CD14-positive monocyte (primary cell): ENCODE measurements at regions of chr14 and their contacts with region 1.

Region 1: GRCh38 chr14:44897045-44897844 is 64.5 kb downstream of the KLHL28 start:
- DNase-seq: peak; percentile 95 to 96 (median 96)
- H3K4me3 ChIP-seq: peak overlapping the region; percentile 75 to 83 (median 82)
- H3K4me3 Mint-ChIP-seq: peak overlapping the region; percentile 86 to 92
- H3K27ac ChIP-seq: peak overlapping the region; percentile 79 to 84
- H3K27ac Mint-ChIP-seq: peak overlapping the region; percentile 87 to 96 (median 95)
- H3K4me1 ChIP-seq: peaks cover 6 to 8% of the 10 kb centered on the region in 2 donors
- H3K4me1 Mint-ChIP-seq: peaks cover 12% of the 10 kb centered on the region
- H3K27me3 ChIP-seq: no peaks in the 10 kb centered on the region
- H3K27me3 Mint-ChIP-seq: peaks cover 0 to 5% (median 0%) of the 10 kb centered on the region in 3 donors
- CTCF ChIP-seq: no peak

Region 2: DNA sequence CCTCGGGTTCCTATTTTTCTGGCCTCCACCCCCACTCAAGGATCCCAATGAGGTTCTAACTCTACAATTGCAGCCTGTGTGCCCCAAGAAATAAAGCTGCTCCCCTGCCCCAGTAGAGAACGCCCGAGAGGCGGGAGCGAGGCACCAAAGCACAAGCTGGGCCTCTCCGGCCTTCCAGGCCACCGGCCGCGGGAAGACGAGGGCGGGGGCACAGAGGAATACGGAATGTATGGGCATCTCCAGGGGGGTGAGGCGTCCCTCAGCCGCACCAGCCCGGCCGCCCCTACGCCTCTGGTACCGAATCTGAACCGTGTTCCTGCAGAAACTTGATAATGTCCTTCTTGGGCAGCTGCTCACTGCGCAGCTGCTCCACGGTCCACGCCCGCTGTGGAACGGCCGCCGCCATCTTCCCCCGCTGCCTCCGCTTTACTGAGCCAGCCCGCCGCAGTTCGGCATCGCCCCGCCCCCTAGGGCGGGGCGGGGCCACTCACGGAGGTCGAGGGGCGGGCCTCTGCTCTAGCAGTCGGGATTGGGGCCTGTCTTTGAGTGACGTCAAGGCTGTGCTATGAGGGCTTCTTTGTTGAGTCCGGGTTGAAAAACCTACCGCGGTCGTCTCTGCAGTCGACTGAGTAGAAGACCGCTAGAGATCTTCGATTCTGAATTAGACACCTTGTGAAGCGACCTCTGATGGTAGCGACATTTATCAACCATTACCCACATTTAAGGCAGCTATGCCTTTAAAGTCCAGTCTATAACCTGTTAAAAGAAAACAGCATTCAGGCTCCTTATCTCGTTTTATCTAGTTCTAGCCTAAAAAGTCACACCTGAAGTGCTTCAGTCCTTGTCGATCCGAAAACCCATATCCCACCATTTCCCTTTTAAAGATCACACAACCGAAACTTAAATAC is 237.1 kb after region 1 on chr14 and contains the start of gene FKBP3:
- intact Hi-C with region 1: loop called in 1 of 2 experiments (anchors 5 kb)
- DNase-seq: peak; percentile 96 to 98 (median 97)
- H3K4me3 ChIP-seq: peak within 1 kb of the TSS; percentile 59 to 99 (median 91)
- H3K4me3 Mint-ChIP-seq: peak within 1 kb of the TSS; percentile 98 to 99
- H3K27ac ChIP-seq: peak within 1 kb of the TSS; percentile 73 to 87
- H3K27ac Mint-ChIP-seq: peak within 1 kb of the TSS; percentile 95 to 98 (median 97)
- H3K4me1 ChIP-seq: peaks cover 19 to 28% of the 10 kb centered on the region in 2 donors
- H3K4me1 Mint-ChIP-seq: peaks cover 30% of the 10 kb centered on the region
- H3K27me3 ChIP-seq: no peaks in the 10 kb centered on the region
- H3K27me3 Mint-ChIP-seq: no peaks in the 10 kb centered on the region
- CTCF ChIP-seq: no peak
- polyA plus RNA-seq, gene FKBP3: 18.1 to 50.3 (median 42.5) TPM

Region 3: GRCh38 chr14:45253068-45253753 is 356.0 kb after region 1 on chr14 and contains the start of gene MIS18BP1:
- intact Hi-C with region 1: loop called in 1 of 2 experiments (anchors 10 kb)
- DNase-seq: peak; percentile 94 to 96 (median 95)
- H3K4me3 ChIP-seq: peak within 1 kb of the TSS; percentile 94 to 98 (median 95)
- H3K4me3 Mint-ChIP-seq: peak within 1 kb of the TSS; percentile 90 to 93
- H3K27ac ChIP-seq: peak within 1 kb of the TSS; percentile 83 to 93
- H3K27ac Mint-ChIP-seq: peak within 1 kb of the TSS; percentile 92 to 98 (median 96)
- H3K4me1 ChIP-seq: peaks cover 49 to 61% of the 10 kb centered on the region in 2 donors
- H3K4me1 Mint-ChIP-seq: peaks cover 44% of the 10 kb centered on the region
- H3K27me3 ChIP-seq: no peaks in the 10 kb centered on the region
- H3K27me3 Mint-ChIP-seq: peaks cover 0 to 1% (median 0%) of the 10 kb centered on the region in 3 donors
- CTCF ChIP-seq: peak; percentile 61
- polyA plus RNA-seq, gene MIS18BP1: 39.2 to 61.8 (median 45.6) TPM